RWPE1 (cell line): ENCODE measurements at regions of chr16 and their contacts with region 1.

Region 1: DNA sequence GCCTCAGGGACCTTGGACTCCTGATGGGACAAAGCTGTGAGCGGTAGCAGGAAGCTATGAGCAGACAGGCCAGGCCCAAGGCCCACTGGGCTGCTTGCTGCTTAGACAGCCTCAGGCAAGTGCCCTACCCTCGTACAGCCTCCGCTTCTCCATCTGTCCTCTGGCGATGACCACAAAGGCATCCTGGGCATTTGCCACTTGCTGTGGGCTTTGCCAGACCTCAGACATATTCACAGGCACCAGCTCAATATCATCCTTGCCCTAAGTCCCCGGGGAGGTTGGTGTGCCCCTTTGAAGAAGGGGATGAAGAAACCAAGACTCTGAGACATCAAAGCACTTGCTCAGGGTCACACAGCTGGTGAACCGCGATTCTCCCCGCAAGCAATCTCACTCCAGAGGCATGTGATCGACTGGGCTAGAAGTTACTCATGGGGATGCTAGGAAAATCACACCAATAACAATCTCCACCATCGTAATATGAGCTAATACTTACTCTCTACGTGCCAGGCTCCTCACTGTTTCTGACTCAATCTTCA is 21.7 kb downstream of the PPL start:
- DNase-seq: no peak
- H3K27ac ChIP-seq: peak overlapping the region; percentile 72
- CTCF ChIP-seq: no peak

Region 2: GRCh38 chr16:4886151-4886550 is 29.1 kb before region 1 on chr16:
- CTCF ChIA-PET with region 1: no interaction called
- POLR2A ChIA-PET with region 1: no interaction called
- DNase-seq: no peak
- H3K27ac ChIP-seq: peak overlapping the region; percentile 78
- CTCF ChIP-seq: no peak

Region 3: GRCh38 chr16:4897347-4897746 is 17.9 kb before region 1 on chr16:
- CTCF ChIA-PET with region 1: no interaction called
- POLR2A ChIA-PET with region 1: interaction called, 17 read pairs
- DNase-seq: no peak
- H3K27ac ChIP-seq: peak overlapping the region; percentile 72
- CTCF ChIP-seq: no peak

Region 4: DNA sequence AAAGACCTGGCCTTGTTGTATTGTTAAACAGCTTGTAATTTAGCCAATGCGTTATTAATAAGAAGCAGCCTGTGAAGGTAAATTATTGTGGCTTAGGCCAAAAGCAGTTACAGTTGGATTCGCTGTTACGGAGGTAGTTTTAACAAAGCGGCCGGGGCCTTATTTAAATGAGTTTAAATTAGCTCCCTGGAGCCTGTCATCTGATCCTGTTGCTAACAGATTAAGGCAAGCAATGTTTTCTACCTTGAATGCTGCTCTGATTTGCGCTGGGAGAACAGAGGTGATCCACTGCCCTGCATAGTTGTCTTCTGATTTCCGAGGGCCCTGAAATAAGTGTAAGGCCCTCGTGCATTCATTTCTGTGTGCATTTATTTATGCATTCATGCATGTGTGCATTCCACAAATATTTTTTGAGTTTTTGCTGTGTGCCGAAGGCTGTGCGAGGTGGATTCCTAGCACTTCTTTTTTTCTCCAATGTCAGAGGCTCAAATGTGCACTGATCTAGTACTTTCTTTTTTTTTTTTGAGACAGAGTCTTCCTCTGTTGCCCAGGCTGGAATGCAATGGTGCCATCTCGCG is 53.7 kb after region 1 on chr16:
- CTCF ChIA-PET with region 1: no interaction called
- POLR2A ChIA-PET with region 1: no interaction called
- DNase-seq: no peak
- H3K27ac ChIP-seq: no peak overlapping the region
- CTCF ChIP-seq: no peak